Activated T-helper 1 cell treated with anti-CD3 and anti-CD28 coated beads, Interleukin-12 subunit alpha, Interleukin-12 subunit beta, Interleukin-2, Interleukin-4 antibody, amounts not matched to agents 30 ng/mL and 10 ng/mL and 1 ng/mL, durations not matched to agents 14 hours and 24 hours and 36 hours (primary cell): ENCODE measurements at regions of chr2 and their contacts with region 1.

Region 1: GRCh38 chr2:157876066-157876787 is at the start of gene ACVR1:
- DNase-seq: peak; percentile 80
- H3K4me3 Mint-ChIP-seq: peak within 1 kb of the TSS; percentile 98
- H3K27ac Mint-ChIP-seq: peak within 1 kb of the TSS; percentile 96
- H3K4me1 Mint-ChIP-seq: peaks cover 65% of the 10 kb centered on the region
- H3K27me3 Mint-ChIP-seq: no peaks in the 10 kb centered on the region
- total RNA-seq, gene ACVR1: 44.0 and 46.5 TPM in 2 replicates

Region 2: DNA sequence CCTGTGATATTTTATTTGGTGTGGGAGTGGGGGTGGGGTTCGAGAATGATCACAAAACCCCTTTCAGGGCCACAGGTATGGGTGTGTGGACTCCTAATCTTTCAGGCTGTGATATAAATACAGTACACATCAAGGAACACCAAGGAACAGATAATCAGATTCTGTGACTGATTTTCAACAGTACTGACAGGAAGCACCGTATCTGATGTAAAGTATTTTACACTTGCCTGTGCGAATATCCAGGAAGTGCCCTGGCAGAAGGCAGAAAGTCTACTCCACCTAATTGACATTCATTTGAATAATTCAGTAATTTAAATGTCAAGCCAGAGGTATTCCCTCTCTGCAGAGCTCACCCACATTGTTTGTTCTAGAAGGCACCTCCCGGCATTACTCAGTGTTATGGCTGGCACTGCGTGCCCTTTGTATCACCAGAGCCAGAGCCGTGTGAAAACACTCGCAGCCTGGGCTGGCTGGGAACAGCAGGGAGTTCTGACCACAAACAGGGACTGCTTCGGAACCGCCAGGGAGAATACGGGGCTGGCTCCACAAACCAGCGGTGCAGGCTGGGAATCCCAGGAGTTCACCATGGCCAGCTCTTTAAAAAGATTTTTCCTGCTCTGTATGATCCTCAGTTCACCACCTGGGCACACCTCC is 91.9 kb before region 1 on chr2:
- intact Hi-C with region 1: loop called (anchors 1 kb)
- DNase-seq: no peak
- H3K4me3 Mint-ChIP-seq: peak overlapping the region; percentile 37
- H3K27ac Mint-ChIP-seq: peak overlapping the region; percentile 32
- H3K4me1 Mint-ChIP-seq: peaks cover 87% of the 10 kb centered on the region
- H3K27me3 Mint-ChIP-seq: no peaks in the 10 kb centered on the region

Region 3: DNA sequence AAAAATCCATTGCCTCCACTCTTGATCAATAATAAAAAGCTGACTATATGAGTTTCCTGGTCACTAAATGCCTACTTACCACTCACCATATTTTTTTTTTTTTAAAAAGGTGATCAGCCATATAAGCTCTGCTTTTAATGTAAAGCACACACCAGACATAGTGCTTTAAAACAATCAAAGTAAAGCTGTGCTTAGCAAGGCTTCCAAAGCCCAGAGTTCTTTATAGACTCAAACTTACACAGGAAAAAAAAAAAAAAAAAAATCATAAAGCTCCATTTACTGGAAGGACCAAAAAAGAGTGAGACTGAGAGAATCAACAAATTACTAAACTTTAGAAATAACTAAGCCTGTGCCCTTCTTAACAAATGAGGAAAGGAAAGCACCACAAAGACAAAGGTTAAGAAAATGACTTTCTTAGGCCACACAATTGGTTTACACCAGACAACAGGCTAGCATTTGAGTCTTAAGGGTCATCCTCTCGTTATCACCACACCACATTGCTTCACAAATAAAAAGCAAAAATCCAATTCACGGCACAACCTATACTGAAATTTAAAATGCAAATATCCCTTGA is 11.3 kb before region 1 on chr2:
- intact Hi-C with region 1: loop called (anchors 1 kb)
- DNase-seq: no peak
- H3K4me3 Mint-ChIP-seq: peak overlapping the region; percentile 32
- H3K27ac Mint-ChIP-seq: peak overlapping the region; percentile 88
- H3K4me1 Mint-ChIP-seq: peaks cover 54% of the 10 kb centered on the region
- H3K27me3 Mint-ChIP-seq: no peaks in the 10 kb centered on the region